ENCODE measurements at regions of chr12 and their contacts with region 1.

Region 1: DNA sequence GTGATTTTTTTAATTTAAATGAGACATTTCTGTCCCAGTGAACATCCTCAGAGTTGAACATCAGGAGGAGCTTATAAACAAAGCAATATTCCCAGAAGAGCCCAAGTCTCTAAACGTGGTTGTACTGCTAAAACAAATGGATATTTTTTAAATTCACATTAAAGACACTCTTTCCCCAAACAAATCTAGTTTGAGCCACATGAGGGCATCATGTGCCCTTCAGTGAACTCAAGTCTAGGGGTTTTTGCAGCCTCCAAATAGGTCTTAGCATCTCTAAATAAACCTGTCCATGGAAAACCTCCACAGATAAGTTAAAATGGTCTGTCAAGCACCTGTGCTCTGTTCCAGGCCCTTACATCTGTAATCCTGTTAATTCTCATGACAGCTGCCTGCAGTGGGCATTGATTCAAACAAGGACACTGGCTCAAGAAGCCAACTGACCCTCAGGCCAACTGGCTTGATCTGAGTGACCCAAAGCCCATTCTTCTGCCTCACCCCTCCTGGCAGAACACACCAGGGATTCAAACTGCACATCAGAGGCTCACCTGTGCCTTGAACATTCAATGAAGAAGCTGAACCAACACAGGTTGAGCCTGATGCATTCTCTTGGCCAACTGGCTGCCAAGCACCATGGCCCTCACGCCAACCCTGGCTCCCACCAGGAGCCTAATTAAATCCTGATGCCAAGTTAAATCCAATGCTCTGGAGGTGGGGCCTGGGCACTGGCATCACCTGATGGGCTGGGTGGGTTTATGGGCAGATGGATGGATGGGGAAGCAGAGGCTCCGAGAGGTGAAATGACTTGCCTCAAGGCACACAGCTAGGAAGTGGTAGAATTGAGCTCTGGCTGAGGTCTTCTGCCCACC is 8.6 kb downstream of the ISCU start:
- DNase-seq: no peak
- ATAC-seq: no peak
- H3K4me3 ChIP-seq: no peak overlapping the region
- H3K27ac ChIP-seq: no peak overlapping the region
- H3K4me1 ChIP-seq: peaks cover 3% of the 10 kb centered on the region
- H3K27me3 ChIP-seq: no peaks in the 10 kb centered on the region

Region 2: GRCh38 chr12:108430245-108430644 is 140.7 kb before region 1 on chr12:
- intact Hi-C with region 1: no loop called
- DNase-seq: peak in 1 of 3 donors; percentile 13
- ATAC-seq: no peak
- H3K4me3 ChIP-seq: no peak overlapping the region
- H3K27ac ChIP-seq: no peak overlapping the region
- H3K4me1 ChIP-seq: no peaks in the 10 kb centered on the region
- H3K27me3 ChIP-seq: no peaks in the 10 kb centered on the region

Region 3: DNA sequence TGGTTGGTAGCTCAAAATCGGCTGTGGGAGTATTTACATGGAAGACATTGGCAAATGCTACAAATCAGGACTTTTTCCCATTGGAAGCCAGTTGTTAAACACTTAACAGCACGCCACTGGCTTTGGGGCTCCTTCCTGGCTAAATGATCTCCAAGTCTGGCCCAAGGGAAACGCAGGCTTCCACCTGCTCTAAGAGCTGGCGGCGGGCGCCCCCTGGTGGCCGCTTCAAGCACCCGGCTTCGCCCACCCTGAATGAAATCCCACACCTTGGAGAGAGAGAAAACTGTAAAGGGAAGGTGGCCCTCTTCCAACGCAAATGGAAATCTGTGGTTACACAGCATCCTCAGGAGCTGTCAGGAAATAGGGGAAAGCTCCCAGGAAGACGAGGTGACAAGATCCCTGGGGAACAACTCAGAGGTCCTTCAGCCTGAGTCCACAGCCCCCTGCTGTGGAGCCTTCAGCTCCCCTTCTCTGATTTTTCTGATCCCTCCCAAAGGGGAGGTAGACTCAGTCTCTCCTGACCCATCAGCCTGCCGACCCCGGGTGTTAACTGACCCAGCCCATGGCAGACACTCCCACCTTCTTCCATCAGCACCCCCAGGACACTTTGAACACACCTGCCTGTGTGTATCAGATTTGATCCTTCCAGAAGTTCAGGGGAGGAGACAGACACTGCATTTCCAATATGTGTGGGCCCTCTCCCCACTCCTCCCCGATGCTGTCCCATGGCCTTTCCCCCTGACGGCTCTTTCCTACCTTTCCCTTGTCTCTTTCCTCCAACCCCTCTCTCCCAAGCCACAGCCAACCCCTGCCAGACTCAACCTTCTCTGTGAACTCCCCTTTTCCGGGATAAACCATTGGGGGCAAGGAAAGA is 47.3 kb after region 1 on chr12:
- intact Hi-C with region 1: loop called (anchors 2 to 5 kb)
- DNase-seq: peak; percentile 79 to 91 (median 91)
- ATAC-seq: peak; percentile 78 to 81
- H3K4me3 ChIP-seq: no peak overlapping the region
- H3K27ac ChIP-seq: no peak overlapping the region
- H3K4me1 ChIP-seq: no peaks in the 10 kb centered on the region
- H3K27me3 ChIP-seq: no peaks in the 10 kb centered on the region

Region 4: DNA sequence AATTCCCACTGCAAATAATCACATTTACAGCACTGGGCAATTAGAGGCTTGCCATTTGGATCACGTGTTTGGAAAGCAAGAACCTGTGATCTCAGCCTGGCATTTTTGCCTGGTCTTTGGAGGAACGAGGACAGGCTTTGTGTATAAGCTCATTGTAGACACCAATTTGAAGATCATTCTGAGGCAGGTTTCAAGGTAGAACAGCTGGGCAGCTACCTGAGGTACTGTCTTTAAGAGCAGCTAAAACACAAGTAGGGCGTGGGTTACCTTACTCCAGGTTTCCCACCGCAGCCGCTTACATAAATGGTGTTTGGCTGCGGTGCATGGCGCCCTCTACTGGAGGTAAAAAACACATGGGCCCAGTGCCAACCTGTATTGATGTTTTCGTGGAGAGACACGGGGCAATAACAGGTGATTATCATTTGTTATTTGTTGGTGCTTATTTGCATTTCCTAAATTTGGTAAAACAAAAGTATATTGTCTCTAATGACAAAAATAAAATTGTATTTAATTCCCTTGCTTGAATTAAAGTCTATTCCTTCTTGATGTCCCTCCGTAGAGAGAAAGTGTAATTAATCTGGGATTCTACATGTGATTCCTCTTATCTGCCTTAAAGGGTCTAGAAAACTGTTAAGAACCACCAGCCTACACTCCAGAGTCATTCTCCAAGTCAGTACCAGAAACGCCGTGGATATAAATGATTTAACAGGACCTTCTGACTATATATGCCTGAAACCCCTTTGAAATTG is 380.2 kb after region 1 on chr12:
- intact Hi-C with region 1: loop called in 1 of 4 experiments (anchors 10 kb)
- DNase-seq: peak; percentile 44 to 85 (median 75)
- ATAC-seq: peak; percentile 66 to 69
- H3K4me3 ChIP-seq: no peak overlapping the region
- H3K27ac ChIP-seq: no peak overlapping the region
- H3K4me1 ChIP-seq: no peaks in the 10 kb centered on the region
- H3K27me3 ChIP-seq: no peaks in the 10 kb centered on the region

Measured in right cardiac atrium (tissue), 5 donors.